Testis (tissue), 5 donors: ENCODE measurements at regions of chr19 and their contacts with region 1.

Region 1: GRCh38 chr19:17069218-17069617 is 6.0 kb downstream of the HAUS8 start:
- DNase-seq: no peak
- H3K4me3 ChIP-seq: no peak overlapping the region
- H3K27ac ChIP-seq: no peak overlapping the region
- H3K4me1 ChIP-seq: peaks cover 7% of the 10 kb centered on the region
- H3K27me3 ChIP-seq: no peaks in the 10 kb centered on the region
- CTCF ChIP-seq: no peak
- POLR2A ChIP-seq: no peak

Region 2: GRCh38 chr19:16417660-16418596 is 651.3 kb before region 1 on chr19:
- intact Hi-C with region 1: no loop called
- DNase-seq: peak; percentile 70
- H3K4me3 ChIP-seq: no peak overlapping the region
- H3K27ac ChIP-seq: peak overlapping the region in 1 of 2 donors; percentile 11
- H3K4me1 ChIP-seq: peaks cover 4% of the 10 kb centered on the region
- H3K27me3 ChIP-seq: no peaks in the 10 kb centered on the region
- CTCF ChIP-seq: peak; percentile 77 to 90 (median 87)
- POLR2A ChIP-seq: no peak

Region 3: GRCh38 chr19:17145546-17146497 is 76.6 kb after region 1 on chr19:
- intact Hi-C with region 1: no loop called
- DNase-seq: no peak
- H3K4me3 ChIP-seq: no peak overlapping the region
- H3K27ac ChIP-seq: no peak overlapping the region
- H3K4me1 ChIP-seq: peaks cover 5% of the 10 kb centered on the region
- H3K27me3 ChIP-seq: no peaks in the 10 kb centered on the region
- CTCF ChIP-seq: no peak
- POLR2A ChIP-seq: no peak

Region 4: DNA sequence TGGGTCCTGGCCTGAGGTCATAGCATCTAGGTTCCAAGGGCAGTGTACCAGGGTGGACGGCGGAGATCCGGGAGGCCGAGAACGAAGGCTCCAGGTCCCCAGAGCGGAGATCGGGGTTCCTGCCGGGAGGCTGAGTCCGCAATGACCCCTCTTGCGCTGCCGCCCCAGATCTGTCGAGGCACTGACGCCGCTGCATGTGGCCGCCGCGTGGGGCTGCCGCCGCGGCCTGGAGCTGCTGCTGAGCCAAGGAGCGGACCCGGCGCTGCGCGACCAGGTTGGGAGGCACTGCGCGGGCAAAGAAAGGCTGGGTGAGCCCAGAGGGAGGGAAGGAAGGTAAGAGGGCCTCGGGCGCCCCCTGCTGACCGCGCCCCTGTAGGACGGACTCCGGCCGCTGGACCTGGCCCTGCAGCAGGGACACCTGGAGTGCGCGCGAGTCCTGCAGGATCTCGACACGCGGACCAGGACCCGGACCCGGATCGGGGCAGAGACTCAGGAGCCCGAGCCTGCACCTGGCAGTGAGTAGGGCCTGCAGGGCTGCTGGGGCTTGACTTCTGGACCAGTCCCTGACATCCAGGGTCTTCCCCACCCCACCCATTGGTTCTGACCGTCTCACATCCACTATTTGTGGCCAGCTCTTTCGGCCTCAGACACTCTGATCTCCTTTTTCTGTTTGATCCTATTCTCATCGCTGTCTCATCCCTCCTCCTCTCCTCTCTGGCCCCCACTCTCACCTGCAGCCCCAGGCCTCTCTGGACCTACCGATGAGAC is 213.5 kb after region 1 on chr19:
- intact Hi-C with region 1: loop called (anchors 10 kb)
- DNase-seq: peak; percentile 91
- H3K4me3 ChIP-seq: peak overlapping the region; percentile 9 to 47
- H3K27ac ChIP-seq: no peak overlapping the region
- H3K4me1 ChIP-seq: peaks cover 10% of the 10 kb centered on the region
- H3K27me3 ChIP-seq: no peaks in the 10 kb centered on the region
- CTCF ChIP-seq: peak; percentile 73 to 92 (median 88)
- POLR2A ChIP-seq: no peak